Activated CD4-positive, alpha-beta memory T cell treated with anti-CD3 and anti-CD28 coated beads for 36 hours (primary cell): ENCODE measurements at regions of chr4 and their contacts with region 1.

Region 1: GRCh38 chr4:184825896-184826690 is at the start of gene ACSL1:
- DNase-seq: peak; percentile 84
- H3K4me3 Mint-ChIP-seq: peak within 1 kb of the TSS; percentile 87
- H3K27ac Mint-ChIP-seq: peak within 1 kb of the TSS; percentile 75
- H3K4me1 Mint-ChIP-seq: peaks cover 37% of the 10 kb centered on the region
- H3K27me3 Mint-ChIP-seq: no peaks in the 10 kb centered on the region
- total RNA-seq, gene ACSL1: 22.0 to 22.2 TPM

Region 2: GRCh38 chr4:184616633-184617551 is 209.2 kb before region 1 on chr4:
- CTCF ChIA-PET with region 1: no interaction called
- POLR2A ChIA-PET with region 1: no interaction called
- intact Hi-C with region 1: no loop called
- DNase-seq: no peak
- H3K4me3 Mint-ChIP-seq: no peak overlapping the region
- H3K27ac Mint-ChIP-seq: no peak overlapping the region
- H3K4me1 Mint-ChIP-seq: no peaks in the 10 kb centered on the region
- H3K27me3 Mint-ChIP-seq: no peaks in the 10 kb centered on the region

Region 3: DNA sequence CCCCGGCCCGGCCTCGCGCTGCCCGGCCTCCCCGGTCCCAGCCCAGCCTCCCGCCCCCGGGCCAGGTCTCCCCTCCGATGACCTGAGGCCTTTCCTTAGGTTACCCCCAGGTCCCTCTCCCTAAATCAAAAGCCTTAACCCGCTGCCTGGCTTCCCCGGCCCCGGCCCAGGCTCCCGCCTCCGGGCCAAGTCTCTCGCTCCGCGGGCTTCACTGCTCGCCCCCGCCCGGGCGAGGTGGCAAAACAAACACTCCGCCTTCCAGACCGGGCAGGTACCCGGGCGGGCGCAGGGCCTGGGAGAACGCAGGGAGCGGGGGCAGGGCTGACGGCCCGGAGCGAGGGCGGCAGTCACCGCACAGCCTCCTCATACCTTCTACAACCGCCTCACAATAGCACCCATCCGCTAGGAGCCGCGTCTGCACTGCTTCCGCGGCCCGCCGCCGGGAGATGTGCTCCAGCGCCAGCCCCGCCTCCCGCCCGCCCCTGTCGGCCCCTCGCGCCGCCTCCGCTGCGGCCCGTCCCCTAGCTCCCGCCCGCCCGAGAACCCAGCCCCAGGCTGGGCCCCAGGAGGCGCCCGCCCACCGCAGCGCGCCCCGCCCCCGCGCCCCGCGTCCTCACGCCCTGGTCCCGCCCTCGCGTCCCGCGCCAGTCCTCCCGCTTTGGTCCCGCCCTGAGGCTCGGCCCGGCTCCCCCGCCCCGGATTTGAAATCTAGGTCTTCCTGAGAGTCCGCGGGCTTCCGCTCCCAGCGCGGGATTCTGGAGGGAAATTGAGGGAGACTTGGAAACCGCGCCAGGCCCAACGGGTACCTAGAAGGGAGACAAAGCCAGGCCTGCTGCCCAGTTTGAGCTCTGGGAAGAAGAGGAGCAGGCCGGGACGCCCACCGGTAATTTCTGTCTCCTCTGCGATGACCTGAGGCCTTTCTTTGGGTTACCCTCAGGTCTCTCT is 176.8 kb before region 1 on chr4 and contains the starts of genes CASP3 and PRIMPOL:
- CTCF ChIA-PET with region 1: no interaction called
- POLR2A ChIA-PET with region 1: interaction called, 5 read pairs
- intact Hi-C with region 1: loop called (anchors 1 kb)
- DNase-seq: peak; percentile 98
- H3K4me3 Mint-ChIP-seq: peak within 1 kb of the TSS; percentile 91
- H3K27ac Mint-ChIP-seq: peak within 1 kb of the TSS; percentile 91
- H3K4me1 Mint-ChIP-seq: peaks cover 50% of the 10 kb centered on the region
- H3K27me3 Mint-ChIP-seq: no peaks in the 10 kb centered on the region
- total RNA-seq, gene CASP3: 54.0 to 54.4 TPM
- total RNA-seq, gene PRIMPOL: 23.1 to 27.1 TPM

Region 4: DNA sequence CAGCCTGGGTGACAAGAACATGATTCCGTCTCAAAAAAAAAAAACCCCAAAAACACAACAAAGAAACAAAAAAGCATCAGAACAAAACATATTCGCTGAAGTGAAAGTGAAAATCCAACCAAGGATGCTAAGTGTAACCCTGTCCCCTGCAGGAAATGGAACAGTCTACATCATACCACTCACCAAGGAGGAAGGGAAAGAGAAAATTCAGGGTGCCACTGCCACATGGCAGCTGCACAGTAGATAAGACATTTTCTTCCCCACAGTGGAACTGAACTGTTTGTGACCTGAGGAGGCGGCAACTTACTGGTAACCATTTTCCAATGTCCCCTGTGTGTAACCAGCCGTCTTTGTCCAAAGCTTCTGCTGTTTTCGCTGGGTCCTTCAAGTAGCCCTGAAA is 64.0 kb before region 1 on chr4:
- CTCF ChIA-PET with region 1: no interaction called
- POLR2A ChIA-PET with region 1: no interaction called
- intact Hi-C with region 1: loop called (anchors 1 kb)
- DNase-seq: peak; percentile 54
- H3K4me3 Mint-ChIP-seq: peak overlapping the region; percentile 28
- H3K27ac Mint-ChIP-seq: peak overlapping the region; percentile 78
- H3K4me1 Mint-ChIP-seq: peaks cover 14% of the 10 kb centered on the region
- H3K27me3 Mint-ChIP-seq: no peaks in the 10 kb centered on the region

Region 5: GRCh38 chr4:184845367-184846021 is 19.4 kb after region 1 on chr4:
- CTCF ChIA-PET with region 1: interaction called, 3 read pairs
- POLR2A ChIA-PET with region 1: no interaction called
- intact Hi-C with region 1: loop called (anchors 2 kb)
- DNase-seq: no peak
- H3K4me3 Mint-ChIP-seq: no peak overlapping the region
- H3K27ac Mint-ChIP-seq: no peak overlapping the region
- H3K4me1 Mint-ChIP-seq: peaks cover 16% of the 10 kb centered on the region
- H3K27me3 Mint-ChIP-seq: peaks cover 11% of the 10 kb centered on the region